GM10248 (cell line): ENCODE measurements at regions of chr12 and their contacts with region 1.

Region 1: GRCh38 chr12:11797317-11797913 is 147.9 kb downstream of the ETV6 start:
- DNase-seq: no peak
- CTCF ChIP-seq: no peak

Region 2: GRCh38 chr12:11812586-11813427 is 15.4 kb after region 1 on chr12:
- CTCF ChIA-PET with region 1: interaction called, 16 read pairs
- POLR2A ChIA-PET with region 1: interaction called, 3 read pairs
- DNase-seq: peak; percentile 59
- CTCF ChIP-seq: no peak

Region 3: DNA sequence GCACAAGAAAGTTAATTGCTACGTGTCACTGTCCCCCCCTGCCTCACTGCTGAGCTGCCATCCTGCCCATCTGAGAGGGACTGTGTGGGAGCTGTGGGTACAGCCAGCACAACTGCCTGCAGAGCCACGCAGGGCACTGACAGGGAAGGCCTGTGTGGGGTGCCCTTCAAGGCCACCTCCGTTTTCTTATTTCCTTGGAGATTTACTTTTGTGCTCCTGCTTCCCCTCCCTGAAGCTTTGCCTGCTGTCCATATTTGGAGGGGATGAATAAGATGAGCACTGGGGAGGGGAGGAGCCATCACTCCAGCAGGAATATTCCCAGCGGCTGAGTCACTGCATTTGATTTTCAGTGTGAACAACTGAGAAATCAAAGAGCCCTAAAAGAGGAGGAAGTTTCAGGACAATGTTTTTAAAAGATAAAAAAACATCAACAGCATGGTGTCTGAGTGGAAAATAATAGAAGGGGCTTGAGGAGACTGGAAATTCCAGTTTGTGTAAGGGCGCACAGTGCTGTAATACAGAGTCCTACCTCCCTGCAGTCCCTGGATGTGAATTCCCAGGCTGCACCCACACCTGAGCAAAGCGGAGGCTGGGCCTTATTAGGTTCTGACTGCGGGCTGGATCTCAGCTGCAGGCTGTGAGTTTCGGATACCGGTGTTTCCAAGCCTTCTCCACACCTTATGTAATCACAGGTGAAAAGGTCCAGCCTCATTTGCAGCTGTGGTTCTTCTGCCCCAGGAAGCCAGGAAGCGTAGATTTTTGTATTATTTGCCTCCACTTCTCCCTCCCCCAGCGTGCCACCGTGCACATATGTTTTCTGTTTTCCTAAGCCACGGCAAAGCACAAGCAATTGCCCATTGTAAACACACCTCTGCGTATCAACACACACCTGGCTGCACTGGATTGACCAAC is 80.7 kb after region 1 on chr12:
- CTCF ChIA-PET with region 1: no interaction called
- POLR2A ChIA-PET with region 1: no interaction called
- DNase-seq: no peak
- CTCF ChIP-seq: no peak